ENCODE measurements at regions of chr18 and their contacts with region 1.

Region 1: DNA sequence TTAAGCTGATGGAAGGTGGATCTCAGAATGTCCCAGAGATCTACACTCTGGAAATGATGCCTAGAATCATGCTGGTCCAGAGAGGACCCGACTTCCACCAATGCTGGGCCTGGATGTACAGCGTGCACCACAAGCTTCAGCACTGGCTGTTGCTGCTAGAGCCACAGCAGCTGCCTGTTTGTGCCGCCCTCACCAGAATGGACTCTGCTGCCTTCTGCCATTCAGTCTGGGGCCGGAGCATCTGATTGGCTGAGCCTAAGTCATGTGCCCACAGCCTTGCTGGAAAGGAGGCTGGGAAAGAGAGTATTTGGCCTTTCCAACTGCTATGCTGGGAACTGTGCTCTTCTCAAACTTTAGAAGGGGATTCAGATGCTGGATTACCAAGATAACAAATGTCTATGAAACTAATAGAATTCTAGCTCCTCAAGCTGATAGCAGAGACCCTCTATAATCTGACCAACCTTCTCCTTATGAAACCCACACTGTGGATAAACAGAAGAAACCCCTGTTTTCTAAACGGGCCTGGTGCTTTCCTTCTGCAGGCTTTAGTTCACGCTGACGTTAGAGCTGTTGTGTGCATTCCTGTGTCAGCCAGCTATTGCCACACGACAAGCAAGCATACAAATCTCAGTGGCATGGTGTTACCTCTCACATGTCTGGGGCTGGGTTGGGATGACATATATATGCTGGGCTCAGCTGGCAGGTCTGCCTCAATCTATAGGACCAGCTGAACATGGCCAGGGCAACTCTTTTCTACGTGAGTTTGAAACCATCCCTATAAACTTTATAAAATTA is 4.1 kb upstream of the LOXHD1 start:
- H3K4me3 ChIP-seq: no peak overlapping the region
- H3K27ac ChIP-seq: no peak overlapping the region
- H3K4me1 ChIP-seq: no peaks in the 10 kb centered on the region
- CTCF ChIP-seq: no peak

Region 2: GRCh38 chr18:46148810-46149209 is 512.3 kb before region 1 on chr18:
- CTCF ChIA-PET with region 1: interaction called, 63 read pairs
- POLR2A ChIA-PET with region 1: interaction called, 3 read pairs
- H3K4me3 ChIP-seq: no peak overlapping the region
- H3K27ac ChIP-seq: no peak overlapping the region
- H3K4me1 ChIP-seq: peaks cover 8% of the 10 kb centered on the region
- CTCF ChIP-seq: 0 out of 2 replicates have a peak, but pooled peaks have one; percentile 45

Region 3: GRCh38 chr18:46281185-46282176 is 379.7 kb before region 1 on chr18:
- CTCF ChIA-PET with region 1: interaction called, 179 read pairs
- POLR2A ChIA-PET with region 1: interaction called, 5 read pairs
- H3K4me3 ChIP-seq: no peak overlapping the region
- H3K27ac ChIP-seq: no peak overlapping the region
- H3K4me1 ChIP-seq: no peaks in the 10 kb centered on the region; the same call in 1 of the 2 replicates
- CTCF ChIP-seq: peak; percentile 44; the same call in 1 of the 2 replicates

Region 4: DNA sequence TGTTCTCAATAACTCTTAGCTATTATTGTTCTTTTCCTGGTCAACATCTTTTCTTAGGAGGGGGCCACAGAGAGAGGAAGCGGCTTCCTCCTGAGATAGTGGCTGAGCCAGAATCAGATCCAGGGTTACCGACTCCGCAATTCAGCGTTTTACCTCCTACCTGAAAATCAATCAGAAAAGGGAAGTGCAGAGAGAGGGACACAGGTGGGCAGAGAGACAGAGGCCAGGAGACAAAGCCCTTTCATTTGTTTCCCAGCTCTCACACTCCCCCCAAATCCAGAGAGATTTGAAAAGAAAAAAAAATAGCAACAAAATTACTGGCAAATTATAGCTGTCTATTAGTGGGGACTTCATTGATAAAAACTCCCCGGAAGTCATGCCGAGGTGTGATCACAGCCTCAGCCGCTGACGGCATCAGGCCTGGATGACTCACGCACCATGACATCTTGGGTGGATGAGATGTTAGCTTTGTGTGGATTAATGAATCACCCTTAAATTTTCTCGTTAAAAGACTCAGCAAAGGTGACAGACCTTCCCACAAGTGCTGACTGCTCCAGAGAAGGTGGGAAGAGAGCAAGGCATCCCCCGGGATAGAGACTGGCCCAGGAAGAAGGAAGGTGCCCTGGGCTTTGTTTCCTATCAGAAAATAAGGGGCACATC is 124.8 kb before region 1 on chr18:
- CTCF ChIA-PET with region 1: interaction called, 11 read pairs
- POLR2A ChIA-PET with region 1: no interaction called
- H3K4me3 ChIP-seq: no peak overlapping the region
- H3K27ac ChIP-seq: no peak overlapping the region
- H3K4me1 ChIP-seq: no peaks in the 10 kb centered on the region
- CTCF ChIP-seq: no peak

Region 5: DNA sequence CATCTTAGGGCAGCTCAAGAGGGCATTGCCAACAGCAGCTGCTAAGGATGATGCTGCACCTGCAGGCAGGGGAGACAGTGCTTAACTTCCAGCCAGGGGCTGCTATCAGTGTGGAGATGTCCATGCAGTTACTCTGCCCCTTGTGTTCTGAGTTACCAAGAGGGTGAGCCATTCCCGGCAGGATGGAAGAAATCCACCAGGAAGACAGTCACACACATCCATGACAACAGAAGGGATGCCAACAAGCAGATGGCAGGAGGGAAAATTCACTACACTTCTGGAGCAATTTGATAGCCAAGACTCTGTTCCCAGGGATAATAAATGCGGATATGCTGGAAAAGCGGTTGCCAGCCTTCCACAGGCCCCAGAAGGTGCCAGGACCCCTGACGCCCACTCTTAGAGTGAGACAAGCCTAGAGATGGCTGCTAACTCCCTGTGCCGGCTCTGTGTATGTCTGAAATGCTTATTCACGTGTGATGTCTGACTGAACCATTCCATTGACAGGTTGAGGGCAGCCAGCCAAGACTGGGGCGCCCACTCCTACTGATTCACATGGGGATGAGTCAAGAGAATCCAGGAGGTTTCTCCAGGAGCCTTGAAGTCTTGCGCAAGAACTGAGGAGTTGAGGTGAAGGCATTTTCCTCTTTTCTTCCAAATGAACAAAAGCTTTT is 28.6 kb before region 1 on chr18:
- CTCF ChIA-PET with region 1: interaction called, 12 read pairs
- POLR2A ChIA-PET with region 1: no interaction called
- H3K4me3 ChIP-seq: no peak overlapping the region
- H3K27ac ChIP-seq: no peak overlapping the region
- H3K4me1 ChIP-seq: no peaks in the 10 kb centered on the region
- CTCF ChIP-seq: no peak

Region 6: GRCh38 chr18:46649071-46649862 is 11.9 kb before region 1 on chr18:
- CTCF ChIA-PET with region 1: interaction called, 27 read pairs
- POLR2A ChIA-PET with region 1: no interaction called
- H3K4me3 ChIP-seq: no peak overlapping the region
- H3K27ac ChIP-seq: no peak overlapping the region
- H3K4me1 ChIP-seq: no peaks in the 10 kb centered on the region
- CTCF ChIP-seq: no peak

Measured in HEK293 (cell line).